Gastrocnemius medialis (tissue), 4 donors: ENCODE measurements at regions of chr5 and their contacts with region 1.

Region 1: DNA sequence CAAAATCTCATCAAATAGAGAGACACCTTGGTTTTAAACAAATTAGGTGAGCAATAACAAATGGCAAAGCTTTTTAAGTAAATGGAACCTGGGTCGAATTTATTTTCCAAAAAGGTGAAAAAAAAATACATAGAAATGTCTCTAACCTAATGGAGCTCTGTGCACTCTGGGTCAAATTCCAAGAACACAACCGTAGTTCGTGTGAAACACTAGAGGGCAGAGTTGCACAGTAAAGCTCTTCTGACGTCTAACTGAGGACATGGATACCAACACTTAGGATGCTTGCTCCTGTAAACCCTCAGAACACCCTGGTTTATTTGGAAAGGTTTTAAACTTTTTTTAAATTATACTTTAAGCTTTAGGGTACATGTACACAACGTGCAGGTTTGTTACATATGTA is 18.9 kb downstream of the MARCHF11 start:
- DNase-seq: no peak
- ATAC-seq: peak in 1 of 2 donors; percentile 71
- H3K4me3 ChIP-seq: no peak overlapping the region
- H3K27ac ChIP-seq: no peak overlapping the region
- H3K4me1 ChIP-seq: no peaks in the 10 kb centered on the region
- H3K27me3 ChIP-seq: no peaks in the 10 kb centered on the region
- CTCF ChIP-seq: peak in 3 of 5 experiments; percentile 32 to 54 (median 47)
- POLR2A ChIP-seq: no peak

Region 2: GRCh38 chr5:14513266-14513665 is 1647.4 kb before region 1 on chr5:
- in situ Hi-C with region 1: no loop called
- intact Hi-C with region 1: no loop called
- DNase-seq: no peak
- ATAC-seq: no peak
- H3K4me3 ChIP-seq: no peak overlapping the region
- H3K27ac ChIP-seq: no peak overlapping the region
- H3K4me1 ChIP-seq: no peaks in the 10 kb centered on the region
- H3K27me3 ChIP-seq: no peaks in the 10 kb centered on the region
- CTCF ChIP-seq: no peak
- POLR2A ChIP-seq: no peak

Region 3: GRCh38 chr5:16253856-16254255 is 93.2 kb after region 1 on chr5:
- in situ Hi-C with region 1: no loop called
- intact Hi-C with region 1: no loop called
- DNase-seq: no peak
- ATAC-seq: no peak
- H3K4me3 ChIP-seq: no peak overlapping the region
- H3K27ac ChIP-seq: no peak overlapping the region
- H3K4me1 ChIP-seq: no peaks in the 10 kb centered on the region
- H3K27me3 ChIP-seq: no peaks in the 10 kb centered on the region
- CTCF ChIP-seq: no peak
- POLR2A ChIP-seq: no peak

Region 4: DNA sequence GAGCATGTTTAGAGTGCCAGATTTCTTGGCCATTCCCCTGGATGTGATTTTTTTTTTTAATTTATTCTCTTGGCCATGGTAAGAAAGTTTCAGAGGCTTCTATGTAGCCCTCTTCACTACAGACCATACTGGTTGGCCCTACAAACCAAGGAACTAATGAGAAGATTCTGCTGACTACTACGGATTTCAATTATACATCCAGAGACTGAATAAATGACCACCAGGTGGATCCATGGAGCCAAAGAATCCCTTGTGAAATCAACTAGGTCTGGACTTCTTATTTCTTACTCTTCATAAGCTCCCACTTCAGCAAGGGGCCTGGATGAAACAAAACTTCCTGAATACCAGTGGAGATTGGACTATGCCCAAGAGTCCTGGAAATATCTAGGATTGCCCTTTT is 277.3 kb after region 1 on chr5:
- in situ Hi-C with region 1: loop called in 1 of 4 experiments (anchors 25 kb)
- intact Hi-C with region 1: no loop called
- DNase-seq: no peak
- ATAC-seq: peak in 1 of 2 donors; percentile 33
- H3K4me3 ChIP-seq: no peak overlapping the region
- H3K27ac ChIP-seq: no peak overlapping the region
- H3K4me1 ChIP-seq: no peaks in the 10 kb centered on the region
- H3K27me3 ChIP-seq: no peaks in the 10 kb centered on the region
- CTCF ChIP-seq: peak in 2 of 5 experiments; percentile 16 to 31
- POLR2A ChIP-seq: no peak

Region 5: GRCh38 chr5:16528382-16529110 is 367.8 kb after region 1 on chr5:
- in situ Hi-C with region 1: no loop called
- intact Hi-C with region 1: no loop called
- DNase-seq: no peak
- ATAC-seq: peak; percentile 52 to 55
- H3K4me3 ChIP-seq: no peak overlapping the region
- H3K27ac ChIP-seq: peak overlapping the region; percentile 69 to 85 (median 74)
- H3K4me1 ChIP-seq: peaks cover 17 to 25% of the 10 kb centered on the region in 2 donors
- H3K27me3 ChIP-seq: no peaks in the 10 kb centered on the region
- CTCF ChIP-seq: no peak
- POLR2A ChIP-seq: peak in 1 of 2 donors; percentile 36